Activated T-helper 2 cell treated with anti-CD3 and anti-CD28 coated beads, Interferon-gamma antibody, Interleukin-2, Interleukin-4, amounts not matched to agents 10 μg/mL and 5 μg/mL and 100 μg/mL, durations not matched to agents 14 hours and 24 hours and 36 hours (primary cell): ENCODE measurements at regions of chr3 and their contacts with region 1.

Region 1: GRCh38 chr3:15797642-15798303 is at the start of gene ANKRD28:
- DNase-seq: no peak
- H3K4me3 Mint-ChIP-seq: peak within 1 kb of the TSS; percentile 81
- H3K27ac Mint-ChIP-seq: peak within 1 kb of the TSS; percentile 92
- H3K4me1 Mint-ChIP-seq: peaks cover 77% of the 10 kb centered on the region
- H3K27me3 Mint-ChIP-seq: no peaks in the 10 kb centered on the region
- total RNA-seq, gene ANKRD28: 44.2 and 45.5 TPM in 2 replicates

Region 2: GRCh38 chr3:15098503-15099363 is 699.0 kb before region 1 on chr3 and contains the start of gene RBSN:
- intact Hi-C with region 1: loop called (anchors 5 kb)
- DNase-seq: peak; percentile 96
- H3K4me3 Mint-ChIP-seq: peak within 1 kb of the TSS; percentile 91
- H3K27ac Mint-ChIP-seq: peak within 1 kb of the TSS; percentile 94
- H3K4me1 Mint-ChIP-seq: peaks cover 12% of the 10 kb centered on the region
- H3K27me3 Mint-ChIP-seq: peaks cover 2% of the 10 kb centered on the region
- total RNA-seq, gene RBSN: 11.3 and 13.0 TPM in 2 replicates

Region 3: DNA sequence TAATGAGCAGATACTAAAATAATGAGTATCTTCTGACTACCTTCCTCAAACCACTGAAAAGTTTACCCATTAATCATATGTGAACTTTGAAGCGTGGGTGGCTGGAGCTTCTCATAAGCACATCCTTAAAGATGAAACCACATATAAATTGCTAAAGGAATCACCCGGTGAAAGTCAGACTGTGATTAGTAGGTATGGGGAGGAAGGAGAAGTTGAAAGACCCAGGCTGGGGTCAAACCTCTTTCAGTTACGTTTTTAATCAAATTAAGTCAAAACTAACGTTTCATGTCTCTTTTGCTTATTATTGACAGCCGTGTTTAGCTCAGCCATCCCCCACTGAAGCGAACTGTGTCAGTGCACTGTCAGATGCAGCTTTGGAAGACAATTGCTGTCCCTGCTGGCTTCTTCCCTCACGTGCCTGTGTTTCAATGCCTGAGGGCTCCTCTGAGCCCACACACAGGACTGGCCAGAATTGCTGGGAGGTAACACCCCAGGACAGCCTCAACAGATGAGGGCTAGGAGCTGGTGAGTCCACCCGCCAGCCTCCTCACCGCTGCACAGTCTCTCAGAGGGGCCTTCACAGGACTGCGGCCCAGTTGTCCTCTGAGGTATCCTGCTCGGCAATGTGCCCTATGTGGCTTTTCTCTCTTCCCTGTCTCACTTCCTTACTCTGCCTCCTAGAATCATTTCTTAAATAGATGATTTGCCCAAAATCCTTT is 436.1 kb before region 1 on chr3:
- intact Hi-C with region 1: loop called (anchors 2 kb)
- DNase-seq: peak; percentile 36
- H3K4me3 Mint-ChIP-seq: peak overlapping the region; percentile 30
- H3K27ac Mint-ChIP-seq: peak overlapping the region; percentile 81
- H3K4me1 Mint-ChIP-seq: peaks cover 36% of the 10 kb centered on the region
- H3K27me3 Mint-ChIP-seq: no peaks in the 10 kb centered on the region

Region 4: DNA sequence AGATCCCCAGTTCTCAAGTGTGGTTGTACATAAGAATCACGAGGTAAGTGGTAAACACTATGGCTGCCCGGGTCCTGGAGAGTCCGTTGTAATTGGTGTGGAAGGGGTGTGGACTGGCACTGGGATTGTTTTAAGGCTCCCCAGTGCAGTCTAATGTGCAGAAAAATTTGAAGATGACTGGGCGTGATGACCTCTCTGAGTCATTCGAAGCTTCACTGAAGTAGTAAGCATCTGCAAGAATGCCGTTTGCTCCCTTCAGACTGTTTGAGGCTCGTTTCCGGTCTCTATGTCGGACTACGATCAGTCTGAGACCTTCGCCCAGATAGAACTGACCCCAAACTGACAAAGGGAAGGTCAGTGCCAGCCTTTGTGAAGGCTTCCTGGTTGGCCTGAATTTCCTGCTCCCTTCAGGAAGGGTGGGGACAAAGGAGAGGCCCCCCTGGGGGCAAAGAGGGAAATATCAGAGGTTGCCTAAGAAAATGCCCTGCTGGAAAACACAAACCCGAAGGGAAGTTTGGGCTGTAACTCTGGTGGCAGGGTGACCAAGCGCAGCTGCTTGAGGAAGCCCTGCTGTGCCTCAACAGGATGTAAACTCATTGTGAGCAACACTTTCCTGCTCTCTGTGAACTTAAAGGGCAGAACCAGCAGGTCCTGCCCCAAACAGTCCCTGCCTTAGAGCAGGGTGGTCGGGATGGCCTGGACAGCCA is 161.6 kb before region 1 on chr3:
- intact Hi-C with region 1: loop called (anchors 1 kb)
- DNase-seq: no peak
- H3K4me3 Mint-ChIP-seq: peak overlapping the region; percentile 56
- H3K27ac Mint-ChIP-seq: peak overlapping the region; percentile 87
- H3K4me1 Mint-ChIP-seq: peaks cover 59% of the 10 kb centered on the region
- H3K27me3 Mint-ChIP-seq: no peaks in the 10 kb centered on the region

Region 5: GRCh38 chr3:15726043-15726442 is 71.7 kb before region 1 on chr3:
- intact Hi-C with region 1: loop called (anchors 5 kb)
- DNase-seq: no peak
- H3K4me3 Mint-ChIP-seq: no peak overlapping the region
- H3K27ac Mint-ChIP-seq: peak overlapping the region; percentile 15
- H3K4me1 Mint-ChIP-seq: peaks cover 50% of the 10 kb centered on the region
- H3K27me3 Mint-ChIP-seq: no peaks in the 10 kb centered on the region

Region 6: DNA sequence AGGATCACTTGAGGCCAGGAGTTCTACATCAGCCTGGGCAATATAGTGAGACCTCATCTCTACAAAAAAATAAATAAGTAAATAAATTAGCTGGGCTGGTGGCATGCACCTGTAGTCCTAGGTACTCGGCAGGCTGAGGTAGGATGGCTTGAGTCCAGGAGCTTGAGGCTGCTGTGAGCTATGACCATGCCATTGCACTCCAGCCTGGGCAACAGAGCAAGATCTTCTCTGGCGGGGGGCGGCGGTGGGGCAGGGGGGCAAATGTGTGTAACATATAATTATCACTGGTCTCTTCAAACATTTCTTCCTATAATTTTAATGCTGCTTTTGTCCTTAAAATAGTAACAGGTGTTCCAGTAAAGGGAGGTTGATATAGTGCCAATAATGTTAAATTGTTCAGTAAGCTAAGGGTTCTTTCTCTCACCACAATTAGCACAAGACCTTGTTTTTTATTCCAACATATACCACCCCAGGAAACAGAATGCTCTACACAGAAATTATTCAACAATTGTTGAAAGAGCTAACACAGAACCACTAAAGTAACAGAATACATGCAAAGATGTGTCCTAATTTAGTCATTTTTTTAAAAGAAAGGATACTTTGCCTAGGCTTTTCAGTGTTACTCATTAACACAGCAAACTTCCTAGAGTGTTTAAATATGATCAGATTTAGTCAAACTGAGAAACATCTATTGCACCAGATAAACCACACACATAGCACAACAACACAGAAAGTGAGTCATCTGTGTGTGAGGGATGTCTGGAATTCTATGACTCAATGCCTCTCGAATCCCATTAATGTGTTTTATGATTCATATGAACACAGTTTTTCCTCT is 29.1 kb before region 1 on chr3:
- intact Hi-C with region 1: loop called (anchors 1 kb)
- DNase-seq: no peak
- H3K4me3 Mint-ChIP-seq: peak overlapping the region; percentile 31
- H3K27ac Mint-ChIP-seq: peak overlapping the region; percentile 65
- H3K4me1 Mint-ChIP-seq: peaks cover 54% of the 10 kb centered on the region
- H3K27me3 Mint-ChIP-seq: no peaks in the 10 kb centered on the region

Region 7: DNA sequence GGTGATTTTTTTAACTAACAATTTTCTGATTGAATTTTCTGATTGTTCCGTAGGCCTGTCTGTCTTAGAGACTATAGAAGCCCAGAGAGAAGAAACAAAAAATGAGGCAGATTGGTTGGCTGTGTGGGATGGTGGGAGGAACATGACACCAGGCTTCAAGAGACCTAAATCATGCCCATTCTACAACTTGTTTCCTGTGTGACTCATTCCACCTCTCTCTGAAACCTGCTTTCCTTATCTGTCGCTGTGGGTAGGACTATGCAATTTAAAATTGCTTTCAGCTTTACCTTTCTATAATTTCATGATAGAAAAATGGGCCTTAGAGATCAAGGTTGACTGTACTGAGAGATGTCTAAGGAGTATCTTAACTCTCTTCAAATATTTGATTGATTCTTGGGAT is 511.8 kb after region 1 on chr3:
- intact Hi-C with region 1: loop called (anchors 5 kb)
- DNase-seq: peak; percentile 56
- H3K4me3 Mint-ChIP-seq: peak overlapping the region; percentile 60
- H3K27ac Mint-ChIP-seq: peak overlapping the region; percentile 91
- H3K4me1 Mint-ChIP-seq: peaks cover 80% of the 10 kb centered on the region
- H3K27me3 Mint-ChIP-seq: no peaks in the 10 kb centered on the region